ENCODE measurements at regions of chr12 and their contacts with region 1.

Region 1: GRCh38 chr12:122399592-122400373 is 22.7 kb downstream of the CLIP1 start:
- DNase-seq: peak; percentile 66 to 68 (median 67)
- H3K4me3 ChIP-seq: no peak overlapping the region
- H3K4me3 Mint-ChIP-seq: peak overlapping the region; percentile 34 to 81 (median 72)
- H3K27ac ChIP-seq: peak overlapping the region; percentile 18
- H3K27ac Mint-ChIP-seq: peak overlapping the region; percentile 81 to 91 (median 89)
- H3K4me1 ChIP-seq: peaks cover 25% of the 10 kb centered on the region
- H3K4me1 Mint-ChIP-seq: peaks cover 29 to 42% (median 33%) of the 10 kb centered on the region in 4 donors
- H3K27me3 ChIP-seq: no peaks in the 10 kb centered on the region
- H3K27me3 Mint-ChIP-seq: no peaks in the 10 kb centered on the region

Region 2: GRCh38 chr12:122421821-122422729 is 22.3 kb after region 1 on chr12 and contains the start of gene CLIP1:
- CTCF ChIA-PET with region 1: interaction called, 28 read pairs
- POLR2A ChIA-PET with region 1: interaction called, 32 read pairs
- intact Hi-C with region 1: loop called (anchors 1 kb)
- DNase-seq: peak; percentile 50 to 71 (median 63)
- H3K4me3 ChIP-seq: peak within 1 kb of the TSS; percentile 67 to 80
- H3K4me3 Mint-ChIP-seq: peak within 1 kb of the TSS; percentile 89 to 96 (median 94)
- H3K27ac ChIP-seq: peak within 1 kb of the TSS; percentile 64
- H3K27ac Mint-ChIP-seq: peak within 1 kb of the TSS; percentile 87 to 97 (median 95)
- H3K4me1 ChIP-seq: peaks cover 45% of the 10 kb centered on the region
- H3K4me1 Mint-ChIP-seq: peaks cover 22 to 39% (median 31%) of the 10 kb centered on the region in 4 donors
- H3K27me3 ChIP-seq: no peaks in the 10 kb centered on the region
- H3K27me3 Mint-ChIP-seq: no peaks in the 10 kb centered on the region
- total RNA-seq, gene CLIP1: 63.5 to 65.7 TPM

Region 3: GRCh38 chr12:122463806-122464205 is 64.0 kb after region 1 on chr12:
- CTCF ChIA-PET with region 1: interaction called, 332 read pairs
- POLR2A ChIA-PET with region 1: no interaction called
- intact Hi-C with region 1: no loop called
- DNase-seq: no peak
- H3K4me3 ChIP-seq: no peak overlapping the region
- H3K4me3 Mint-ChIP-seq: no peak overlapping the region
- H3K27ac ChIP-seq: no peak overlapping the region
- H3K27ac Mint-ChIP-seq: no peak overlapping the region
- H3K4me1 ChIP-seq: no peaks in the 10 kb centered on the region
- H3K4me1 Mint-ChIP-seq: peaks cover 0 to 2% (median 0%) of the 10 kb centered on the region in 4 donors
- H3K27me3 ChIP-seq: no peaks in the 10 kb centered on the region
- H3K27me3 Mint-ChIP-seq: no peaks in the 10 kb centered on the region

Region 4: DNA sequence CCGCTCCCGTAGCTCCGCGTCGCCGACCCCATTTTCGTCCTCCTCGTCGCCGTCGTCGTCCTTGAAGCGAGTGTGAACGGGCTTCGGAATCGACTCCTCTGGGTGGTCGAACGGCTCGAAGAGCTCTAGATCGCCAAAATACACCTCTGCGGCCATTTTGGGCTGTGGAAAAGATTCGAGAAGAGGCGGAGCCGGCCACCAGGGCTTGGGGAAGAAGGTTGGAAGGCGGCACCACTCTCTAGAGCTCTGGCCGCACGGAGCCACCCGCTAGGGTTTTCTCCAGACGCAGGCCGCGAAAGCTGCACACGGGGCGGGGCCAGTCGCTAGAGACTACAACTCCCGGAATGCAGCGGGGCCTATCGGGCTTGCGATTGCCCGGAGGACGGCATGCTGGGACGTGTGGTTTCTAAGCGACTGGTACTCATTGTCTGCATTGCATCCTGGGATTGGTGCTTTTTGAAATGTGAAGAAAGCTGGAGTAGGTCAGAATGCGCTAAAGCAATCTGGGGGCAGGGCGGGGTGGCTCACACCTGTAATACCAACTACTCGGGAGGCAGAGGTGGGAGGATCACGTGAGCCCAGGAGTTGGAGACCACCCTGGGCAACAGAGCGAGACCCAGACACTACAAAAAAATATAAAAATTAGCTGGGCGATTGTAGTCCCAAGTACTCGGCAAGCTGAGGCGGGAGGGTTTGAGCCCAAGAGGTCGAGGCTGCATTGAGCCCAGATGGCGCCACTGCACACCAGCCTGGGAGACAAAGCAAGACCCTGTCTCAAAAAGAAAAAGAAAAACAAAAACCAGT is 101.1 kb after region 1 on chr12 and contains the start of gene ZCCHC8:
- CTCF ChIA-PET with region 1: interaction called, 21 read pairs
- POLR2A ChIA-PET with region 1: interaction called, 11 read pairs
- intact Hi-C with region 1: no loop called
- DNase-seq: peak; percentile 93 to 98 (median 95)
- H3K4me3 ChIP-seq: peak within 1 kb of the TSS; percentile 55 to 80
- H3K4me3 Mint-ChIP-seq: peak within 1 kb of the TSS; percentile 90 to 98 (median 98)
- H3K27ac ChIP-seq: peak within 1 kb of the TSS; percentile 92
- H3K27ac Mint-ChIP-seq: peak within 1 kb of the TSS; percentile 85 to 99 (median 95)
- H3K4me1 ChIP-seq: peaks cover 44% of the 10 kb centered on the region
- H3K4me1 Mint-ChIP-seq: peaks cover 25 to 50% (median 37%) of the 10 kb centered on the region in 4 donors
- H3K27me3 ChIP-seq: no peaks in the 10 kb centered on the region
- H3K27me3 Mint-ChIP-seq: no peaks in the 10 kb centered on the region
- total RNA-seq, gene ZCCHC8: 52.0 to 59.9 TPM

Region 5: DNA sequence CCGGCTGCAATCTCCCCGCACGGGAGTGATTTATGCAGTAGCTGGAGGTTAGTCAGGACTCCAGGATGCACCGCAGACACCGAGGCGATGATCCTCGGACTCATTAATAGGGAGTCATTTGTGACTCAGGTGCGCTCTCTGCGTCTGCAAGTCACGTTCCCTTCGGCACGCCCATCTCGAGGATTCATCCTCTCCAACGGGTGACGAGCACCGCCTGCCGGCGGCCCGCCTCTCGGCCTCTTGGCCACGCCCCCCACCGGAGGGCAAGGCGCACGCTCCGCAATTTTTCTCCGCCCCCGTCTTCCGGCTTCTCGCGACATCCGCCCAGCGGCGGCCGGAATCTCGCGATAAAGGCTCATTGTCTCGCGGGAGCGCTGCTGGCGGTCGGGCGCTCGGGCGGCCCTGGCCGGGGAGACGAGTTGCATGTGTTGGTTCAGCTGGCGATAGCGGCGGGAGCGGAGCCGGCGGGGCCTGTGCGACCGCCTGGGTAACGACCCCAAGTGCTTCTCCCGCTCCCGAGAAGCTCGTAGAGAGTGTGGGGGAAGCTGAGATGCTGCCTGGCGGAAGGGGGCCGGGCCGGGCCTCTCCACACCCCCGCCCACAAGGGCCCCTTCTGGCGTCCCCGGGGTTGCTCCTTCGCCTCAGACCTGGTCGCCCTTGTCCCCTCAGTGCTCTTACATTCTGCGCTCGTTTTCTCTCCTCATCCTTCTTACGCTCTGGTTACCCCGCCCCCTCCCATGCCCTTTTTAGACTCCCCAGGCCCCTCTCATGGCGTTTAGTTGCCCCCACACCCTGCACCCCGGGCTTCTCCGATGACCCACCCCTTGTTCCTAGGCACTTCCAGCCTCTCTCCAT is 352.9 kb after region 1 on chr12 and contains the start of gene DENR:
- CTCF ChIA-PET with region 1: interaction called, 15 read pairs
- POLR2A ChIA-PET with region 1: no interaction called
- intact Hi-C with region 1: loop called (anchors 1 kb)
- DNase-seq: peak; percentile 99 to 100 (median 99)
- H3K4me3 ChIP-seq: peak within 1 kb of the TSS; percentile 64 to 77
- H3K4me3 Mint-ChIP-seq: peak within 1 kb of the TSS; percentile 93 to 97 (median 94)
- H3K27ac ChIP-seq: peak within 1 kb of the TSS; percentile 87
- H3K27ac Mint-ChIP-seq: peak within 1 kb of the TSS; percentile 90 to 99 (median 97)
- H3K4me1 ChIP-seq: peaks cover 19% of the 10 kb centered on the region
- H3K4me1 Mint-ChIP-seq: peaks cover 35 to 60% (median 47%) of the 10 kb centered on the region in 4 donors
- H3K27me3 ChIP-seq: no peaks in the 10 kb centered on the region
- H3K27me3 Mint-ChIP-seq: no peaks in the 10 kb centered on the region
- total RNA-seq, gene DENR: 47.8 to 49.1 TPM